PC-9 (cell line): ENCODE measurements at regions of chr1 and their contacts with region 1.

Region 1: GRCh38 chr1:86499987-86500593 is 31.4 kb downstream of the CLCA1 start:
- DNase-seq: peak in 1 of 2 experiments; percentile 47
- H3K4me3 ChIP-seq: no peak overlapping the region
- H3K27ac ChIP-seq: no peak overlapping the region
- H3K4me1 ChIP-seq: peaks cover 7% of the 10 kb centered on the region
- H3K27me3 ChIP-seq: no peaks in the 10 kb centered on the region
- CTCF ChIP-seq: peak; percentile 100

Region 2: GRCh38 chr1:86380257-86380861 is 119.7 kb before region 1 on chr1:
- CTCF ChIA-PET with region 1: interaction called, 4 read pairs
- POLR2A ChIA-PET with region 1: no interaction called
- intact Hi-C with region 1: loop called (anchors 1 kb)
- DNase-seq: peak in 1 of 2 experiments; percentile 62
- H3K4me3 ChIP-seq: no peak overlapping the region
- H3K27ac ChIP-seq: no peak overlapping the region
- H3K4me1 ChIP-seq: no peaks in the 10 kb centered on the region
- H3K27me3 ChIP-seq: no peaks in the 10 kb centered on the region
- CTCF ChIP-seq: peak; percentile 91

Region 3: DNA sequence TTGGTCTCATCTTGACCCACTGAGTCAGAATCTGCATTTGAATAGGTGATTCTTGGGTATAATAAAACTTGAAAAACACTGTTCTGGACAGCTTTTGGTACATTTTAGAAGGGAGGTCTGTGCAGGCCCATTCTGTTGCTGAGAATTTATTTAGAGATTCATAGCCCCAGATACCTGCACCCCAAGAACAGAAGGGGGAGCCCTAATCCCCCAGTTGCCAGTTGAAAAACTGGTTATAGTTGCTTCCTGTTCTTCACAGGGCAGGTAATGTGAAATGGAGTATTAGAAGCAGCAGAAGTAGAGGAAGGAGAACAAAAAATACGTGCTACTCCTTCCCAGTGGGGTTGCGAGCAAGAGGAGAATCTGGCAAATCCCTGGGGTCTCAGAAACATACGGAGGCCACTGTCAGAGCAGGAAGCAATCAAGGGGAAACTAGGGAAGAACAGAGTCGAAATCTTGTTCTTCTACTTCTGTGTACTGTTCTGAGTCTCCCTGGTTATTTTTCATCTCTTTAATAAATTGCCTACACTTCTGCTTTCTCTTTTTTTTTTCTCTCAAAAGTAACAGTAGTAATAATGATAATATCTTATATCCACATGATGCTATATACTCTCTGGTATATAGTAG is 80.7 kb before region 1 on chr1:
- CTCF ChIA-PET with region 1: no interaction called
- POLR2A ChIA-PET with region 1: no interaction called
- intact Hi-C with region 1: loop called (anchors 1 kb)
- DNase-seq: peak; percentile 55 to 62
- H3K4me3 ChIP-seq: no peak overlapping the region
- H3K27ac ChIP-seq: no peak overlapping the region
- H3K4me1 ChIP-seq: peaks cover 36% of the 10 kb centered on the region
- H3K27me3 ChIP-seq: no peaks in the 10 kb centered on the region
- CTCF ChIP-seq: peak; percentile 85

Region 4: DNA sequence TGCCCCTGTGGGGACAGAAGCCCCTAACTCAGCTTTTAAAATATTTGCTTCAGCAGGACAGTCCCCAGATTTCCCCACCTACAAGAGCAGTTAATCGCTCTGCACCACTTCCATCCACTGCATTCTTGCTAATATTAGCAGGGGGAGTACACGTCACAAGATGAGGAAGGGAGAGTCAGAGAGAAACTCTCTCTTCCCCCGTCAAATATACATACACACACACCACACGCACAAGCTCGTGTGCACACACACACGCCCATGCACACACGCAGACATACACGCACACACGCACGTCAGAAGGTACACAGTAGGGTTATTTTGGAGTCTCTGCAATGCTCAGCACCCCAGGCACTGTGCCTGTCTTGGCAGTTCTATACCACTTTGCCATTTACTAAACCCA is 29.2 kb before region 1 on chr1:
- CTCF ChIA-PET with region 1: interaction called, 4 read pairs
- POLR2A ChIA-PET with region 1: no interaction called
- intact Hi-C with region 1: loop called (anchors 1 kb)
- DNase-seq: no peak
- H3K4me3 ChIP-seq: no peak overlapping the region
- H3K27ac ChIP-seq: no peak overlapping the region
- H3K4me1 ChIP-seq: no peaks in the 10 kb centered on the region
- H3K27me3 ChIP-seq: no peaks in the 10 kb centered on the region
- CTCF ChIP-seq: no peak

Region 5: GRCh38 chr1:86704458-86704971 is 204.4 kb after region 1 on chr1 and contains the start of gene SH3GLB1:
- CTCF ChIA-PET with region 1: no interaction called
- POLR2A ChIA-PET with region 1: no interaction called
- intact Hi-C with region 1: loop called (anchors 10 kb)
- DNase-seq: peak; percentile 84 to 89
- H3K4me3 ChIP-seq: peak within 1 kb of the TSS; percentile 76
- H3K27ac ChIP-seq: peak within 1 kb of the TSS; percentile 77
- H3K4me1 ChIP-seq: peaks cover 30% of the 10 kb centered on the region
- H3K27me3 ChIP-seq: no peaks in the 10 kb centered on the region
- CTCF ChIP-seq: peak; percentile 97
- total RNA-seq, gene SH3GLB1: 38.3 and 47.6 TPM in 2 replicates

Region 6: GRCh38 chr1:86741947-86742572 is 242.0 kb after region 1 on chr1:
- CTCF ChIA-PET with region 1: no interaction called
- POLR2A ChIA-PET with region 1: no interaction called
- intact Hi-C with region 1: loop called (anchors 1 kb)
- DNase-seq: peak in 1 of 2 experiments; percentile 11
- H3K4me3 ChIP-seq: no peak overlapping the region
- H3K27ac ChIP-seq: no peak overlapping the region
- H3K4me1 ChIP-seq: no peaks in the 10 kb centered on the region
- H3K27me3 ChIP-seq: no peaks in the 10 kb centered on the region
- CTCF ChIP-seq: peak; percentile 95

Region 7: GRCh38 chr1:87084244-87084836 is 584.2 kb after region 1 on chr1:
- CTCF ChIA-PET with region 1: no interaction called
- POLR2A ChIA-PET with region 1: no interaction called
- intact Hi-C with region 1: loop called (anchors 10 kb)
- DNase-seq: peak in 1 of 2 experiments; percentile 59
- H3K4me3 ChIP-seq: no peak overlapping the region
- H3K27ac ChIP-seq: no peak overlapping the region
- H3K4me1 ChIP-seq: no peaks in the 10 kb centered on the region
- H3K27me3 ChIP-seq: no peaks in the 10 kb centered on the region
- CTCF ChIP-seq: peak; percentile 79

Region 8: GRCh38 chr1:87410776-87411480 is 910.8 kb after region 1 on chr1:
- CTCF ChIA-PET with region 1: no interaction called
- POLR2A ChIA-PET with region 1: no interaction called
- intact Hi-C with region 1: no loop called
- DNase-seq: no peak
- H3K4me3 ChIP-seq: no peak overlapping the region
- H3K27ac ChIP-seq: no peak overlapping the region
- H3K4me1 ChIP-seq: no peaks in the 10 kb centered on the region
- H3K27me3 ChIP-seq: no peaks in the 10 kb centered on the region
- CTCF ChIP-seq: no peak